H1 (cell line): ENCODE measurements at regions of chr14 and their contacts with region 1.

Region 1: GRCh38 chr14:74240794-74241651 is 1.8 kb downstream of the VSX2 start:
- DNase-seq: peak in 1 of 2 experiments; percentile 81
- H3K4me3 ChIP-seq: peak overlapping the region; percentile 21 to 55 (median 38); a peak in 7 of 8 replicates
- H3K27ac ChIP-seq: no peak overlapping the region
- H3K4me1 ChIP-seq: peaks cover 6 to 35% (median 15%) of the 10 kb centered on the region in 4 experiments
- H3K27me3 ChIP-seq: peaks cover 59 to 83% (median 75%) of the 10 kb centered on the region in 4 experiments
- CTCF ChIP-seq: no peak
- EP300 ChIP-seq: no peak
- POLR2A ChIP-seq: no peak
- RAD21 ChIP-seq: no peak

Region 2: DNA sequence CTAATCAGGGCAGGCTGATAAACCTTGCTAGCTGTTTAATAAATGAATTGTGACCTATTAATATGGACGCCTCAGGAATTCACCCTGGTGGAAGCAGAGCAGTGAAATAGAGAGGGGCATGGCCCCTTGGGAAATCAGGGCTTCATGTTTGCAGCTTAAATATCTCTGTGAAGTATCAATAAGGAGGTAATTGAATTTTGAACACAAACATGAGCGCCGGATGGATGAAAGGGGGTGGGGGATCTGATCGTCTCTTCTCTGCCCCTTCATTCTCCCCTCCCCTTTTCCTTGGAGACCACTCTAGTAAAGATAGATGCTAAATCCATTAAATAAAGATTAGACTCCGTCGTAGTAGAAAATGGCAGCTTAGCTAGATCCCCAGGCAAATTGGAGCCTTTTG is 85.7 kb before region 1 on chr14:
- CTCF ChIA-PET with region 1: no interaction called
- POLR2A ChIA-PET with region 1: no interaction called
- DNase-seq: no peak
- H3K4me3 ChIP-seq: no peak overlapping the region
- H3K27ac ChIP-seq: no peak overlapping the region
- H3K4me1 ChIP-seq: peaks cover 0 to 2% (median 0%) of the 10 kb centered on the region in 4 experiments; a peak in 1 of 7 replicates
- H3K27me3 ChIP-seq: peaks cover 0 to 1% (median 0%) of the 10 kb centered on the region in 4 experiments; a peak in 1 of 7 replicates
- CTCF ChIP-seq: no peak
- EP300 ChIP-seq: no peak
- POLR2A ChIP-seq: no peak
- RAD21 ChIP-seq: no peak

Region 3: DNA sequence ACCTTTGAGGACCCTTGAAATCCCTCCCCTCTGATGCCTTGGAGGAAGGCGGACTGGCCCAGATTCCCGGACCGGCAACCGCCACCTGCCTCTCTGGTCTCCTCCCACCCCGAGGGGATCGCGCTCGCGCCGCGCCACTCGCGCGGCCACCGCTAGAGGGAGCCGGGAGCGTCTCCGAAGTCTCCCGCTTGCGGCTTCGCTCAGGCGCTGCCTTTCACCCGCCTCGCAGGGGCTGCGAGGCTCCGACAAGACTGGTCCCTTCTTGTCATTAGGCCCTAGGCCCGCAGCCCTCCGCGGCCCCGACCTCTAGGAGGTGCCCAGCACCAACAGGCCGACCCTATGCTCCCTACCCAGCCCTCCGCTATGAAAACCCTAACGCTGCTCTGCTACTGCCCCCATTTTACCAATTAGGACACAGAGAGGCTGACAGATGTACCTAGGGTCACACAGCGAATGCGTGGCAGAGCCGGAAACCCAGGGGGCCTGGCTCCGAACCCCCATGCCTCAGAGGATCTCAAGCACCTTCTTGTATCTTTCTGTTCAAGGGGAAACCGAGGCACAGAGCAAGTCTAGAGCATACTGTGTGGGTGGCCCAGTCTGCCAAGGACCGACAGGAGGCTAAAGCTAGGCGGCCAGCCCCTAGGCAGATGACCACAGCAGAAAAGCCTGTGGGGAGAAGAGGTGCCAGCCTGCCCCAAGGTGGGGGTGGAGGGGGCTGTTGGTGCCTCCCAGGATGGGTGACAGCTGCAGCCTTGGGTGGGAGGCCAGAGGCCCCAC is 23.2 kb before region 1 on chr14:
- CTCF ChIA-PET with region 1: interaction called, 139 read pairs
- POLR2A ChIA-PET with region 1: interaction called, 3 read pairs
- DNase-seq: peak; percentile 67 to 97
- H3K4me3 ChIP-seq: peak overlapping the region in 1 of 4 experiments; percentile 29; a peak in 1 of 8 replicates
- H3K27ac ChIP-seq: no peak overlapping the region
- H3K4me1 ChIP-seq: peaks cover 0 to 7% (median 0%) of the 10 kb centered on the region in 4 experiments; a peak in 1 of 7 replicates
- H3K27me3 ChIP-seq: peaks cover 0 to 20% (median 15%) of the 10 kb centered on the region in 4 experiments; a peak in 6 of 7 replicates
- CTCF ChIP-seq: peak; percentile 87 to 96 (median 89)
- EP300 ChIP-seq: no peak
- POLR2A ChIP-seq: no peak
- RAD21 ChIP-seq: peak; percentile 56 to 80

Region 4: DNA sequence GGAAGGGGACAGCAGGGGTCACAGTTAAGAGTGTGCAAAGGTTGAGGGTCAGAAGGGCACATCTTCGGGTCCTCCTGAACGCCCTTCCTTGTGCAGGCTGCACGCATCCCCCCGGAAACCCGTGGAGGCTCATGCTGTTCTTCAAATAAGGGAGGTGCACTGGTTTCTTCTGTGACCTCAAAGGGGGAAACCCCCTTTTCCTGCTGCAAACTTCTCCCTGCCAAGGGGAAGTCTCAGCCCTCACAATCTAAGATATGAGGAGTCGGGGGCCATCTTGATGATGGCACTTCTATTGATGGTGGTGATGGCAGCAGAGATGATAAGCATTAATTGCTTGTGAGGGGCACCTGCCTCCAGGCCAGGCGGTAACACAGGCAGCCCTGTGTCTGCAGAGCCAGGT is 292.6 kb after region 1 on chr14:
- CTCF ChIA-PET with region 1: no interaction called
- POLR2A ChIA-PET with region 1: no interaction called
- DNase-seq: no peak
- H3K4me3 ChIP-seq: no peak overlapping the region
- H3K27ac ChIP-seq: no peak overlapping the region
- H3K4me1 ChIP-seq: no peaks in the 10 kb centered on the region; a peak in 2 of 7 replicates
- H3K27me3 ChIP-seq: no peaks in the 10 kb centered on the region
- CTCF ChIP-seq: no peak
- EP300 ChIP-seq: no peak
- POLR2A ChIP-seq: no peak
- RAD21 ChIP-seq: no peak